BJ (cell line): ENCODE measurements at regions of chr6 and their contacts with region 1.

Region 1: DNA sequence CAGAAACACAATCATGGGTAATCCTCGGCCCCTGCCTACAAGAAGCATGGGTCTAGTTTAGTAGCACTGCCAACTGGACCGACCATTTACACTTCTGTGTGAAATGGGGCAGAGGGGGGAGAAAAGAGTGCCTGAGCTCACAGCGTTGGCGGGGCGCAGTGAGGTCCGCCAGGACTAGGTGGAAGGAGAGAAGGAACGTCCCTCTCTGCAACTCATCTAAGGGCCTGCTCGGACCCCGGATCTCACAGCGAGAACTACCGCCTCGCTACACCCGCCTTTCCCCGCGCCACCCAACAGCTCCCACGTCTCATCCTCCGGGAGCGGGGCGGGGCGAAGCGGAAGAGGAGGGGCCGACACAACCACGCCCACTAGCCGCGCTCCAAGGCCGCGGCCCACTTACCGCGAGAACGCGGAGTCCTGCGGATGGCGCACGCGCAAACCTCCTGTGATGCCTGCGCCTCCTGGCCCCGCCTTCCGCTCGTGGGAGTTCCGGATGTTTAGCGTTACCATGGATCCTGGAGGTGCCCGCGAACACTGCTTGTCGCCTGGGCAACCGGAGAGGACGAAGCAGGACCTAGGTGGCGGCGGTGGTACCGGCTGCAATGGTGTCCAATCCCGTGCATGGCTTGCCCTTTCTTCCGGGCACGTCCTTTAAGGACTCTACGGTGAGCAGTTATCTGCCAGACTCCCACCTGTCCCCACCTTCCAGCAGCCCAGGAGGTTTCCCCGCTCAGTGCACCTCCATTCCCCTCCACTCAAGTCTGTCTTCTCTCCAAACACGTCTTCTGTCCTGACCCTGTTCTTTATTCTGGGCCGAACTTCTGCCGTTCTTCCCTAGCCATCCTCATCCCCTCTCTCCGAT is at the start of gene EFHC1:
- DNase-seq: peak; percentile 84
- H3K4me3 ChIP-seq: peak within 1 kb of the TSS; percentile 84
- H3K27me3 ChIP-seq: no peaks in the 10 kb centered on the region
- CTCF ChIP-seq: no peak
- polyA plus RNA-seq, gene EFHC1: 16.6 and 26.3 TPM in 2 replicates

Region 2: DNA sequence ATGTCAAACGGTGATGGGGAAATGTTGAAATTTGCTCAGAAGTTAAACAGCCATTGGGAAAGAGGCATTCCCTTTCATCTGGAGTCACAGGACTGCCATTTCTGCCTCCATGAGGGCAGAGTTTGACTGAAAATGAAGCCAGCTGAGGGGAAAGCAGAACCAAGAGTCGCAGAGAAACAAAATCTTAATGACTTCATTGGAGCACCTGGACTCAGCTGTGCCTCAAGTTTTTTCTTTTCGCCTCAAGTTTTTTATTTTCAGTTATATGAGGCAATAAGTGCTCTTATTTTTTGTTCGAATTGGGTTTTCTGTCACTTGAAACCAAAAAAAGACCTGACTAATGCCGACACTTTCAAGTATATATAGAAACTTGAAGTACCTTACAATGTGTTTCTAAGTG is 493.9 kb before region 1 on chr6:
- CTCF ChIA-PET with region 1: no interaction called
- POLR2A ChIA-PET with region 1: no interaction called
- DNase-seq: no peak
- H3K4me3 ChIP-seq: no peak overlapping the region
- H3K27me3 ChIP-seq: no peaks in the 10 kb centered on the region
- CTCF ChIP-seq: no peak

Region 3: DNA sequence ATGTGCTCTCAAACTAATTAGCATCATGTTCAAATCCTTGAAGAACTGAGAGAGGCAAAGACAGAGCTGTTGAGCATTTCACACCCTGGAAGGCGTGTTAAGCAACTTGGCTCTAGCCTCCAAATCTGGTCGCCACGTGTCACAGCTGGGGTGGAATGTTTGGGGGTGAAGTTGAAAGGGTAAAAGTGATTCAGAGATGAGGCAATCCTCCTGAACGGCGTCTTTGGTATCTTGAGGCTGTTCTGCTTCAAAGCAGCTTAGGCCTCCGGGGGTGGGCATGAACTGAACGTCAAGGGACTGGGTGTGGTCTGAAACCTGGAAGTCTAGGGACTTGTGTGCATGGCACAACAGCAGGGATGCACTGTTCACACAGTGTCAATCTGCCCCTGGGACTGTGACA is 94.5 kb after region 1 on chr6:
- CTCF ChIA-PET with region 1: interaction called, 10 read pairs
- POLR2A ChIA-PET with region 1: no interaction called
- DNase-seq: no peak
- H3K4me3 ChIP-seq: no peak overlapping the region
- H3K27me3 ChIP-seq: no peaks in the 10 kb centered on the region
- CTCF ChIP-seq: no peak

Region 4: DNA sequence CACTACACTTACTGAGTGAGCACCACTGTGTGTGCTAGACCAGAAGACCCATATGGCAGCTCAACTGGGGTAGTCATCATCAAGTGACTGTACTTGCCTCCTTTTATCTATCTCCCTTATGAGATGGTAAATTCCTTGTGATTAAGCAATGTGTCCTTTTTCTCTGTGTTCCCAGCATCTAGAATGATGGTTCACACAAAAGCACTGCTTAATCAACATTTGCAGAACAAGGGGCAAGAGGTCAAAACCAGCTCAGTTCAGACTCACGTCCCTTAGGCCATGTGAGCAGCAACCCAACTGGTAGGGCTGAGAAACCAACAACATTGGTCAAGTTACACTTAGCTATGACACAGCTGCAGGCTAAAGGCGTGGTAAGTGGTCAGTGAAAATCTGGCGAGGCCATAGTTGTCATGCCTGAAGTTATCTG is 146.8 kb after region 1 on chr6:
- CTCF ChIA-PET with region 1: interaction called, 11 read pairs
- POLR2A ChIA-PET with region 1: interaction called, 7 read pairs
- DNase-seq: peak; percentile 97
- H3K4me3 ChIP-seq: no peak overlapping the region
- H3K27me3 ChIP-seq: no peaks in the 10 kb centered on the region
- CTCF ChIP-seq: no peak

Region 5: DNA sequence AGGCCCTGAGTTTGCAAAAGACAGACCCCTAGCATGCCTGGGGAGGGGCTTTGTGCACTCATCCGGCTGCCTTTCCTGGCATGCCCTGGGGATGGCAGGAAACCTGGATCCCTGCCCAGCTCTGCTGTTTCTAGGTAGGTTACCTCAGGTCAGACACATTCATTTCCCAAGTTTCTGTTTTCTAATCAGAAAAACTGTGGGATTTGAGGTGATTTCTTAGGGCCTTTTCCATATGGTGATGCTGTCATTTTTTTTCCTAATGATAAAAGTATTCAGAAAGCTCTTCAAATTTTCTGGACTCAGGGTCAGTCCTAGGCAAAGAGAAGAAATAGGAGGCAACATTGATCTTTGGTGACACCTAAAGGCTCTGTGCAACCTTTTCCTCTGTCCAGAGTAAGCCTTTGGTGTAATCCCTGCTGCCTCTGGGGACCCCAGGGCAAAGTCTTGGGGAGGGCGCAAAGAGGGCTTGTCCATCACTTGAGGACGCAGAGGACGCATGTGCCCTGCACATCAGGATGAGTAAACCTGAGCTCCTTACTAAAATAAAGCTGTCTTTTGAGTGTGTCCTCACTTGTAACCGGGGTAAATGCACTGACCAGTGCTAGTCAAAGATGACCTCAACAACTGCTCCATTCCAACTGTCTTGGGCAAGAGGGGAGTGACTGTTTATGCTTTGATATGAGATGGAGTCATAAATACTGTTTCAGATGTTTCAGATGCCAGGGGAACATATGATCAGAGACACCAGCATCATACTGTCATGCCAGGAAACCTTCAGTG is 170.3 kb after region 1 on chr6:
- CTCF ChIA-PET with region 1: interaction called, 59 read pairs
- POLR2A ChIA-PET with region 1: no interaction called
- DNase-seq: peak; percentile 61
- H3K4me3 ChIP-seq: no peak overlapping the region
- H3K27me3 ChIP-seq: no peaks in the 10 kb centered on the region
- CTCF ChIP-seq: no peak; the same call in 1 of the 2 replicates

Region 6: GRCh38 chr6:52650941-52651340 is 230.9 kb after region 1 on chr6:
- CTCF ChIA-PET with region 1: interaction called, 35 read pairs
- POLR2A ChIA-PET with region 1: no interaction called
- DNase-seq: no peak
- H3K4me3 ChIP-seq: no peak overlapping the region
- H3K27me3 ChIP-seq: no peaks in the 10 kb centered on the region
- CTCF ChIP-seq: no peak